ENCODE measurements at regions of chr5 and their contacts with region 1.

Region 1: DNA sequence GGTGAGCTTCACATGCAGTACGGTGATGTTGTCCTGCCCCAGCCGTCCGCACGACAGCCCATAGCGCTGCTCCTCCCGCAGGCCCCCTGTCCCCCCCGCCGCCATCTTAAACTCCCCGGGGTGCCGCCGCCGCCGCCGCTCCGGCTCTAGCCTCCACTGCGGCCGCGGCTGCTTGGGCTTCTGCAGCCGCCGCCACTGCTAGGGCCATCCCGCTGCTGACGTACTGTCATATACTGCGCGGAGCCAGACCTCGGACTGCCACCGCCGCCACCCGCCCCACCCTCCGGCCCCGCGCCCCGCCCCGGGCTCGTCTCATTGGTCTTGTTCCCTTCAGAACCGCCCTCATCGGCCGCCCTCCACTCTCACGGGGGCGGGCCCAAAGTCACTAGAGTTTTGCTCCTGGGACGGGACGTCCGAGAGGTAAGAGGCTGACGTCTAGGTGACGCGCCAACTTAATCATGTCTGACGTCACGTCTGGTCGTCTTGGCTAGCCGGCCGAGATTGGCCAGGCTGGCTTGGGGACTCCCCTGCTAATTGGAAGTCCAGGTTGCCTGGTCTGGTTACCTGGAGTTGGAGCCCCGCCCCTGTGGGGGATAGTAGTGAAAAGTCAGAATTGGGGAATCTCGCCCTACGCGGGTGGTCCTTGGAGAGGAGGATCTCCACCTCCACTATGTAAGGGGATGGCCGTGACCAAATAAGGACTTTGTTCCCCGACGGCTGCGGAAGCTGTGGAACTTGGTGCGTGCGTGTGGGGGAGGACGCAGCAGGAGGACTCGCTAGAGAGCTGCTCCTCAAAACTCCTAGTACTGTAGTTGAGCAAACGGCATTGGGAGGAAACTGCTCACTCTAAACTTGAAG is at the start of gene ELL2:
- DNase-seq: peak; percentile 98
- ATAC-seq: peak; percentile 92
- H3K4me3 ChIP-seq: peak within 1 kb of the TSS; percentile 99
- H3K27ac ChIP-seq: peak within 1 kb of the TSS; percentile 99
- H3K4me1 ChIP-seq: no peaks in the 10 kb centered on the region
- H3K27me3 ChIP-seq: no peaks in the 10 kb centered on the region
- CTCF ChIP-seq: no peak
- POLR2A ChIP-seq: peak; percentile 97
- RAD21 ChIP-seq: no peak
- total RNA-seq, gene ELL2: 92.5 and 137 TPM in 2 replicates

Region 2: DNA sequence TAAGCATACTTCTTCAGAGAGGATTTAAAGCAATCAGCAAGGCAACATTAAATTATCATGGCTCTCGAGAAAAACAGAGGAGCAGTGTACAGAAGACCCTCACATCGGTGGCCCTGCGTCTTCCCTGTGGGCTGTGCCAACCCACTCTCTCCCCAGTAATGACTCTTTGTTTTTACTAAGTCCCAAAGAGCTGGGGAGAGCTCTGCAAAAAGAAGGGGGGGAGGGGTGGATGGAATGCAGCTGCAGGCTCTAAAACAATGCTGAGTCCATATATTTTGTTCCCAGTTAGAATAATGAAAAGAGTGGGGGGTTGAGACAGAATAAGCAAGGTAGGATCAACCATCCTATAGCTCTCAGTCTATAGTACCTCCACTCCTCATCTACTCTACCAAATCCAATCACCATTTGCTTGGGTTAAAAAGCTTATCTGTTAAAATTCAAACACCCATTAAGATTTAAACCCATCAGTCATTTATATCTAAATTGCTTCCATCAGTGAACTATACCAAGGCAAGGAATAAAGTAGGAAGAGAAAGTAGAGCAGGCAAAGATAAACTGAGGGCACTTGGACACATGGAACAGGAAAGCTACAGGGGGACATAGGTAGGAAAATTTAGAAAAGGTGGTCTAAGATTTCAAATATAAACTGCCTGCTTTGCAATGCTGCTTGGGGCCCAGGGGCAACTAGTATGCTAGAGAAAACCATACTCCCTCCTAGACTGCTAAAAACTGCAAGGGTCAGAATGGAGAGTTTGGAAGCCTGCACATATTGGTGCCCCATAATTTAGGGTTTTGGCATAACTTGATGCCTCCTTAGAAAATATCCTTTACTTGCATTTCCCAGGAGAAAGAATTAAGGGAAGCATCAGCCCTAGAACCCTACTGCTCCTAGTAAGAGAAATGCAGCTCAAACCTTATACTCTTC is 20.8 kb before region 1 on chr5:
- CTCF ChIA-PET with region 1: no interaction called
- POLR2A ChIA-PET with region 1: interaction called, 13 read pairs
- dilution Hi-C with region 1: no loop called
- in situ Hi-C with region 1: no loop called
- intact Hi-C with region 1: no loop called
- DNase-seq: no peak
- ATAC-seq: peak; percentile 30
- H3K4me3 ChIP-seq: no peak overlapping the region
- H3K27ac ChIP-seq: peak overlapping the region; percentile 66; the same call in 1 of the 2 replicates
- H3K4me1 ChIP-seq: peaks cover 35% of the 10 kb centered on the region
- H3K27me3 ChIP-seq: no peaks in the 10 kb centered on the region
- CTCF ChIP-seq: no peak
- POLR2A ChIP-seq: no peak
- RAD21 ChIP-seq: no peak

Region 3: DNA sequence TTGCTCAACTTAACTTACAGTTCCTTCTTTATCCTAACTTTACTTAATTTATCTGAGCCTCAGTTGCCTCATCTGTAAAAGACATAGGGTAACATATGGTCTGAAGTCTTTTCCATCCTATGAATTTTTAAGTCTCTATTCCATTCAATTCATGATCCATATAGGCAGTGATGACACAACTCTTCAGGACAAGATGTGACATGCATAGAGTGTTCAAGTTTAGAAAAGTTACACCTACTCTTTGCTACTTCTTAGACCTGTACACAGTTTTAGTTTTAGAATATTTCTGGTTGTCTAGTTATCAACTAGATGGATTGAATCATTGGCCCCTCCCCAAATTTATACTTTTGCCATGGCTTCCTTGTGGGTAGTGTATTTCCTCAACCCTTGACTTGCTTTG is 50.6 kb after region 1 on chr5:
- CTCF ChIA-PET with region 1: no interaction called
- POLR2A ChIA-PET with region 1: no interaction called
- dilution Hi-C with region 1: no loop called
- in situ Hi-C with region 1: no loop called
- intact Hi-C with region 1: no loop called
- DNase-seq: no peak
- ATAC-seq: no peak
- H3K4me3 ChIP-seq: no peak overlapping the region
- H3K27ac ChIP-seq: no peak overlapping the region
- H3K4me1 ChIP-seq: peaks cover 6% of the 10 kb centered on the region; the same call in 1 of the 2 replicates
- H3K27me3 ChIP-seq: no peaks in the 10 kb centered on the region
- CTCF ChIP-seq: no peak
- POLR2A ChIP-seq: no peak
- RAD21 ChIP-seq: no peak

Region 4: DNA sequence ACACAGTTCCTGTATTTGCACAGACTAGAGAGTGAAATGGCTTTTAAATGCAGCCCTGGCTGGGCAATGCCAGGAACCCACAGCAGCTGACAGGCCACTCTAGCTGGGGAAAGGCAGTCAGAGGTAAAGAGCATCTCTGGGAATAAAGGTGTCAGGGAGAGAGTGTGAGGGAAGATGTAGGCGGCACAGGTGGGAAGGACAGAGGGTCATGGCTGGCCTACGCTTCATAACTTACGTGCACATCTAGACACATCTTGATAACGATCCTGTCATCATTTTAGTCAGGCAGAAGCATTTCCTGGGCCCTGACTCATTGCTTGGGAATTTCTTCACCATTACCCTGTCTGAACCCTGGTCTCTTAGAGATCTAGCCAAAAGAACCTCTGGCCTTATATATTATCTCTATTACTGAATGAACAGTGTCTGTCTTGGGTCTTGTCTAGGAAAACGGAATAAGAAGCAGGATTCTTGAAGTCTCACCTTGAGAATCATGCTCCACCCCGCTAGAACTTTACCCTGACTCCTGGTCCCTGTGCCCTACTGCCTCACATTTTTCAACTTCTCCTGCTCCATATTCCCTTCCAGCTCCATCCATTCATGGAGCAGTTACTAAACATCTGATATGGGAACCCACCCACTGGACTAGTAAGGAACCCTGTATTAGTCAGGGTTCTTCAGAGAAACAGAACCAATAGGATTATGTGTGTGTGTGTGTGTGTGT is 106.2 kb after region 1 on chr5:
- CTCF ChIA-PET with region 1: interaction called, 3 read pairs
- POLR2A ChIA-PET with region 1: no interaction called
- dilution Hi-C with region 1: no loop called
- in situ Hi-C with region 1: no loop called
- intact Hi-C with region 1: loop called (anchors 5 kb)
- DNase-seq: peak; percentile 95
- ATAC-seq: peak; percentile 80
- H3K4me3 ChIP-seq: no peak overlapping the region
- H3K27ac ChIP-seq: peak overlapping the region; percentile 89
- H3K4me1 ChIP-seq: peaks cover 22% of the 10 kb centered on the region
- H3K27me3 ChIP-seq: no peaks in the 10 kb centered on the region
- CTCF ChIP-seq: no peak
- POLR2A ChIP-seq: peak; percentile 43; the same call in 1 of the 2 replicates
- RAD21 ChIP-seq: peak; percentile 10; the same call in 1 of the 2 replicates

Region 5: GRCh38 chr5:96146675-96147074 is 184.8 kb after region 1 on chr5:
- CTCF ChIA-PET with region 1: no interaction called
- POLR2A ChIA-PET with region 1: no interaction called
- dilution Hi-C with region 1: no loop called
- in situ Hi-C with region 1: no loop called
- intact Hi-C with region 1: loop called (anchors 2 kb)
- DNase-seq: peak; percentile 95
- ATAC-seq: peak; percentile 69
- H3K4me3 ChIP-seq: no peak overlapping the region
- H3K27ac ChIP-seq: peak overlapping the region; percentile 58; the same call in 1 of the 2 replicates
- H3K4me1 ChIP-seq: peaks cover 21% of the 10 kb centered on the region
- H3K27me3 ChIP-seq: no peaks in the 10 kb centered on the region
- CTCF ChIP-seq: no peak
- POLR2A ChIP-seq: no peak
- RAD21 ChIP-seq: no peak

Region 6: GRCh38 chr5:96256778-96257470 is 295.1 kb after region 1 on chr5:
- CTCF ChIA-PET with region 1: interaction called, 3 read pairs
- POLR2A ChIA-PET with region 1: no interaction called
- dilution Hi-C with region 1: no loop called
- in situ Hi-C with region 1: no loop called
- intact Hi-C with region 1: loop called (anchors 1 kb)
- DNase-seq: peak; percentile 96
- ATAC-seq: peak; percentile 22
- H3K4me3 ChIP-seq: no peak overlapping the region
- H3K27ac ChIP-seq: peak overlapping the region; percentile 8; the same call in 1 of the 2 replicates
- H3K4me1 ChIP-seq: peaks cover 23% of the 10 kb centered on the region
- H3K27me3 ChIP-seq: no peaks in the 10 kb centered on the region
- CTCF ChIP-seq: peak; percentile 18; the same call in 1 of the 2 replicates
- POLR2A ChIP-seq: no peak
- RAD21 ChIP-seq: no peak

Region 7: GRCh38 chr5:96324708-96325107 is 362.9 kb after region 1 on chr5:
- CTCF ChIA-PET with region 1: no interaction called
- POLR2A ChIA-PET with region 1: interaction called, 14 read pairs
- dilution Hi-C with region 1: no loop called
- in situ Hi-C with region 1: loop called (anchors 5 kb)
- intact Hi-C with region 1: no loop called
- DNase-seq: peak; percentile 96
- ATAC-seq: peak; percentile 58
- H3K4me3 ChIP-seq: no peak overlapping the region
- H3K27ac ChIP-seq: peak overlapping the region; percentile 39
- H3K4me1 ChIP-seq: peaks cover 16% of the 10 kb centered on the region; the same call in 1 of the 2 replicates
- H3K27me3 ChIP-seq: no peaks in the 10 kb centered on the region
- CTCF ChIP-seq: no peak
- POLR2A ChIP-seq: no peak
- RAD21 ChIP-seq: no peak

Region 8: GRCh38 chr5:96662725-96663513 is 701.1 kb after region 1 on chr5:
- CTCF ChIA-PET with region 1: no interaction called
- POLR2A ChIA-PET with region 1: no interaction called
- dilution Hi-C with region 1: no loop called
- in situ Hi-C with region 1: no loop called
- intact Hi-C with region 1: loop called (anchors 10 kb)
- DNase-seq: peak; percentile 79
- ATAC-seq: peak; percentile 86
- H3K4me3 ChIP-seq: peak overlapping the region; percentile 92
- H3K27ac ChIP-seq: peak overlapping the region; percentile 90
- H3K4me1 ChIP-seq: peaks cover 1% of the 10 kb centered on the region; the same call in 1 of the 2 replicates
- H3K27me3 ChIP-seq: no peaks in the 10 kb centered on the region
- CTCF ChIP-seq: no peak
- POLR2A ChIP-seq: peak; percentile 58; the same call in 1 of the 2 replicates
- RAD21 ChIP-seq: no peak

Measured in IMR-90 (cell line).